Activated naive CD4-positive, alpha-beta T cell treated with anti-CD3 and anti-CD28 coated beads, Interleukin-2, amount 10 ng/mL, durations not matched to agents 7 days and 5 days (primary cell): ENCODE measurements at regions of chr1 and their contacts with region 1.

Region 1: GRCh38 chr1:176691251-176692228 is 228.6 kb downstream of the PAPPA2 start:
- DNase-seq: peak; percentile 22
- H3K4me3 Mint-ChIP-seq: no peak overlapping the region
- H3K27ac Mint-ChIP-seq: no peak overlapping the region
- H3K4me1 Mint-ChIP-seq: no peaks in the 10 kb centered on the region
- H3K27me3 Mint-ChIP-seq: no peaks in the 10 kb centered on the region

Region 2: DNA sequence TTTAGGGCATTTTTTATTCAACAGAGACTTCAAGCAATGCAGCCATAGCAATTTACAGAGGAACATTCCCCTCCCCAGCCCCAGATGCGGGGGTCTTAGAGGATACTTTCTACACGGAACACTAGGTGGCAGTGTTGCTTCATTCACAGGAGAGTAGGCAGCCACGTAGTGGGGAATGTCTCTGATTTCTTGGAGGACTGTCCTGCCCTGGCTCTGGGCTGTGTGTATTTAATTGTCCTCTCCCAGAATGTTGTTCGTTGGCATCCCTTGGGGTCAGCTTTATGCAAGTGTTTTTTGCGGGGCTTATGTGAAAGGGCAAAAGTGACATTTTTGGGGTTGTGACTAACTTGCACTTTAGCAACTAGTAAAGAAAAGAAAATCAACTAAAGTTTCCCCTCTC is 131.7 kb before region 1 on chr1:
- CTCF ChIA-PET with region 1: interaction called, 34 read pairs
- DNase-seq: peak; percentile 33
- H3K4me3 Mint-ChIP-seq: no peak overlapping the region
- H3K27ac Mint-ChIP-seq: no peak overlapping the region
- H3K4me1 Mint-ChIP-seq: no peaks in the 10 kb centered on the region
- H3K27me3 Mint-ChIP-seq: no peaks in the 10 kb centered on the region